ENCODE measurements at regions of chr17 and their contacts with region 1.

Region 1: DNA sequence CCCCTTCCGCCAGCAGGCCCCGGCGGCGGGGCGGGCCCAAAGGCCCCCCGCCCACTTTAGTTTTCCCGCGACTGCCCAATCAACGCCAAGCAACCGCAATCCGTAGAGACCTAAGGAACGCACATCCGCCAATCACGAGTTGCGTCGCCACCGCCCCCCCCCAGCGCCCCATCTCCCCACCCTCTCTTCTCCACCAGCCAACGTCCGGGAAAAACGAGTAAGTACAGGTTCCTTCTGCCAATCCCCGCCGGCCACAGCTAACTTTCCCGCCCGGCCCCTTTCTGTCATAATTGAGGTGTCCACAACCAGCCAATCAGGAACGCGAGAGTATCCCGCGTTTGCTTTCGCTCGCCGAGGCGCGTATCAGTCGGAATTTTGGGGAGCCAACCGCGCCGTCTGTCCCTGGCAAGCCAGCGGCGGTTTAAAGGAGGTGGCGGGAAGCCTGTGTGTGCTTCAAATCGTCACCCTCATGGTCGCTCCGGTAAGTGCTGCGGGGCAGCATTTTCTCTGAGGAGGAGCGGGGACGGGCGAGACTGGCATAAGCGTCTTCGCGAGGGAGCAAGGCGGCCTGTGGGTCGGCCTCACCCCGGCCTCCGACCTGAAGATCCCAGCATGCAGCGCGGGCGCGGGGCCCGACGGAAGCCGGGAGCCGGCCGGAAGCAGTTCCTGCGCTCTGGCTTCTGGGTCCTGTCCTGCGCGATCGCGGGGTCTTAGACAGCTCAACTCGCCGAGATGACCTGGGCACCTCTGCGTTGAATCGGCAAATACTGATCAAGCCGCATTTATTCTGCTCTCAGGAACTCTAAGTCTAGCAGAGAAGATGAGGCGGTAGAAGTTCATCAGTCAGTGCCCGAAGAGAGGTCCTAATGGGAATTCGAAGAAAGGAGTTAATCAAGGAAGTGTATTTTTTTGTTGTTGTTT is at the start of gene MIS12:
- DNase-seq: peak; percentile 99
- total RNA-seq, gene MIS12: 12.5 TPM

Region 2: DNA sequence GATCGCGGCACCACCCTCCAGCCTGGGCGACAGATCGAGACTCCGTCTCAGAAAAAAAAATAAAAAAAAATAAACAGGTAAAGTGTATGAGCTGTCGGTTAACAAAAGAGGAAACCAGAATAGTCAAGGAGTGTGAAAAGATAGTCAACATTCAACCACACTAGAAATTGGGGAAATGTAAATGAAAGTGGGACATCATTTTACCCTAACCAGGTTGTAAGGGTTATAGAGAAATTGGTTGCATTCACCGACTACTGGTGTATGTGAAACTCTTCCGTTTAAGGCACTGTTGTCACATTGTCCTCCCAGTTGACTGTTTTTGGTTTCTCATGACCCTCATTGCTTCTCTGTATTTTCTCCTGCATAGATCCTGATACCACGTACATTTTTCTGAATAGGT is 141.6 kb before region 1 on chr17:
- intact Hi-C with region 1: no loop called
- DNase-seq: no peak

Region 3: GRCh38 chr17:5429191-5429887 is 57.1 kb before region 1 on chr17:
- intact Hi-C with region 1: no loop called
- DNase-seq: no peak

Region 4: DNA sequence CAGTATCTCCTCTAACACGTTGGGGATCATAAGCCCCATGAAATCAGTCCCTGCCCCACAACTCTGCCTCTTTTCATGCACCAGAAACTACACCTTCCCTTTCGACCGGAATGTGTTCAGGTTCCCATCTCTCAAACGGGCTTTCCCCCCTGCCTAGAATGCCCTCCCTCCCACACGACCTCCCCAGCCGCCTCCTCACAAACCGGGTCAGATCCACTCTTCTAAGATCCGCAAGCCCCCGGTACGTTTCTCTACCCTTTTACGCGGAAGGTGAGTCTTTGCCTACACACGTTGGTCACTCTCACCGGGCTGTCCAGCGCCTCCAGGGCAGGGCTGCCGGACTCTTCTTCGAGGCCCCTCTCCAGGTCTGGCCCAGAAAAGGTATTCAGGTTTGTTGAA is 18.4 kb before region 1 on chr17:
- intact Hi-C with region 1: loop called (anchors 2 kb)
- DNase-seq: no peak